Activated CD4-positive, alpha-beta T cell treated with anti-CD3 and anti-CD28 coated beads, Interleukin-2, amount 10 ng/mL, durations not matched to agents 24 days and 14 days (primary cell): ENCODE measurements at regions of chr3 and their contacts with region 1.

Region 1: DNA sequence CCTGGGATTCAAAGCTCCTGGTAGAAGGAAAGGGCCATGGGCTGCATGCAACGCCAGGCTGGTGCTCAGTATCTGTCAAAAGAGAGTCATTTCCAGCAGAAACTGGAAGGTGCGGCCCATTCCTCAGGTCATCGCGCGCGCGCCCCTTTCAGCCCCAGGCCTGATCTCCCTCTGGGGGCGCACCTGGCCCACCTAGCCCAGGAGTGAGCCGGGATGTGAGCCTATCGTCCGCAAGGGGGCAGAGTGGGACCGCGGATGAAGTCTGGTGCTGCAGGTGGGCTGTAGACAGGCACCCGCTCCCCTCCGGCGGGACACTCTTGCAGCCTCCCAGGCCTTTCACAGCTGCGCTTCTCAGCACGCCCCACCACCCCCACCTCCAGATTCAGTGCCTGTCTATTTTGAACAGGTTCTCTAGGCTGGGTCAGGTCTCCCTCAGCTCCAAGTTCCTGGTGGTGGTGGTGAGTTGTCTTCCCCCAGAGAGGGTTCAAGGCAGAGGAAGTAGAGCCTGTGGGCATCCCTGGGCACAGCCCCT is 5.8 kb upstream of the RPL29 start:
- DNase-seq: peak; percentile 96
- H3K4me3 Mint-ChIP-seq: no peak overlapping the region
- H3K27ac Mint-ChIP-seq: no peak overlapping the region
- H3K4me1 Mint-ChIP-seq: peaks cover 16% of the 10 kb centered on the region
- H3K27me3 Mint-ChIP-seq: peaks cover 16% of the 10 kb centered on the region

Region 2: GRCh38 chr3:52123106-52123725 is 121.7 kb after region 1 on chr3:
- intact Hi-C with region 1: loop called (anchors 1 kb)
- DNase-seq: peak; percentile 94
- H3K4me3 Mint-ChIP-seq: no peak overlapping the region
- H3K27ac Mint-ChIP-seq: no peak overlapping the region
- H3K4me1 Mint-ChIP-seq: peaks cover 27% of the 10 kb centered on the region
- H3K27me3 Mint-ChIP-seq: no peaks in the 10 kb centered on the region

Region 3: GRCh38 chr3:52144034-52144795 is 142.7 kb after region 1 on chr3:
- intact Hi-C with region 1: loop called (anchors 1 kb)
- DNase-seq: peak; percentile 95
- H3K4me3 Mint-ChIP-seq: no peak overlapping the region
- H3K27ac Mint-ChIP-seq: peak overlapping the region; percentile 40
- H3K4me1 Mint-ChIP-seq: peaks cover 5% of the 10 kb centered on the region
- H3K27me3 Mint-ChIP-seq: no peaks in the 10 kb centered on the region